Common myeloid progenitor, CD34-positive (primary cell): ENCODE measurements at regions of chr7 and their contacts with region 1.

Region 1: GRCh38 chr7:23369695-23370404 is 70.7 kb downstream of the MALSU1 start:
- DNase-seq: no peak
- H3K4me3 ChIP-seq: no peak overlapping the region
- H3K27ac ChIP-seq: no peak overlapping the region
- H3K4me1 ChIP-seq: peaks cover 5 to 33% (median 17%) of the 10 kb centered on the region in 4 experiments
- H3K27me3 ChIP-seq: no peaks in the 10 kb centered on the region

Region 2: DNA sequence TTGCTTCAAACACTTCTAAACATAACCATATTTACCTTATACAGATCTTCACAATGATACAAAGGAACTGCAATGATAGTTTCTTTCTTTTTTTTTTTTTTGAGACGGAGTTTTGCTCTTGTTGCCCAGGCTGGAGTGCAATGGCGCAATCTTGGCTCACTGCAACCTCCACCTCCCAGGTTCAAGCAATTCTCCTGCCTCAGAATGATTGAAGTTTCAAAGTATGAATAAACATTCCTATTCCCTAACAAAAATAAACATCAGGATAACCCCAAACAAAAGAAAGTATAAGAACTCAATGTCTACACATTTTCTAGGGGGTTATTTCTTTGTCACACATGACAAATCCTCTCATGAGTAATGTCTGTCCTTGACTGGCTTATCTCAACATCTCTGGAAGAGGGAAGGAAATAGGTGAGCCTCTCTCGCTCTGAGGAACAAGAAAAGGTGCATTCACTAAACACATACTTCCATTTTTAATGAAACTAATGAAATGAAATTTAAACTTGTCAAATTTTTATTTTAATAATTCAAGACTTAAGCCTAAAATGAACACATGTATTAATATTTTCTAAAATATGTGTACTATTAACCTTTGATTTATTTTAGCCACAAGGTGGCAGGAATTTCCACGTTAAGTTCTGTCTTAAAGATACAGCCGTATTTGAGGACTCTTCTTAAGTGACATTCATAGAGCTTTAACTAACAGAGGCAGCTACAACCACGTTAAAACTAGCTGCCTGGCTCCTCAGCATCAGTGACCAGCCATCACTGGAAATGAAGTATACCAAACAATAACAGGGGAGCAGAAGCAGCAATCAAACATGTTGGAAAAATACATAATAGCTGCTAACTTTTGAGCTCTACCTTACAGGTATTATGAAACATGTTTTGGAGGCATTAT is 12.4 kb before region 1 on chr7:
- CTCF ChIA-PET with region 1: interaction called, 10 read pairs
- POLR2A ChIA-PET with region 1: no interaction called
- DNase-seq: peak in 2 of 3 donors; percentile 61 to 63
- H3K4me3 ChIP-seq: no peak overlapping the region
- H3K27ac ChIP-seq: no peak overlapping the region
- H3K4me1 ChIP-seq: peaks cover 4 to 38% (median 9%) of the 10 kb centered on the region in 4 experiments
- H3K27me3 ChIP-seq: no peaks in the 10 kb centered on the region